ENCODE measurements at regions of chr11 and their contacts with region 1.

Region 1: DNA sequence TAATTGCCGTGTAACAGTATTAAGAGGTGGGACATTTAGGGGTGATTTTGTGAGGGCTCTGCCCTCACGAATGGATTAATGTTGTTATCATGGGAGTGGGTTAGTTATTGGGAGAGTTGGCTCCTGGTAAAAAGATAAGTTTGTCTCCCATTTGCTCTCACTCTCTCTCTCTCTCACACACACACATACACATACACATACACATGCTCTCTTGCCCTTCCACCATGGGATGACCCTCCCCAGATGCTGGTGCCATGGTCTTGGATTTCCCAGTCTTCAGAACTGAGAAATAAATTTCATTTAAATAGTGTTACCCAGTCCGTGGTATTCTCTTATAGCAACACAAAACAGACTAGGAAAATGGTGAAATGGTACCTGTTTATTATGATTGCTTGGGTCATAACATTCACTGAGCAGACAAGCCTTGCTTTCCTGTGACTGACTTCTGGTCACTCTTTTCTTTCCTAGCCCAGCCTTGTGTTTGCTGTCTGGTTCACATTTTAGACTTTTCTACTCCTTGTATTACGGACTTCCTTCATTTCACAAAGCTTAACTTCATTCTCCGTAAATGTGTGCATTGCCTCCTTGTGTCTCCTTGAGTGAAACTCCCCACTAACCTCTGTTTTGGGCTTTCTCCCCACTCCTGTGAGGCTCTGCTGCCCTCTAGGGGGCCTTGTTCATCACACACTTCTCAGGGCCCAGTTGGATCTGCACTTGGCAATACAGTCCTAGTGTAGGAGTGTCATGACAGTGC is 206.5 kb upstream of the CTSC start:
- DNase-seq: peak; percentile 55
- ATAC-seq: peak; percentile 100
- H3K4me3 ChIP-seq: no peak overlapping the region
- H3K27ac ChIP-seq: no peak overlapping the region
- H3K4me1 ChIP-seq: no peaks in the 10 kb centered on the region
- H3K27me3 ChIP-seq: no peaks in the 10 kb centered on the region
- CTCF ChIP-seq: peak; percentile 93
- EP300 ChIP-seq: no peak
- POLR2A ChIP-seq: no peak
- RAD21 ChIP-seq: peak; percentile 82

Region 2: DNA sequence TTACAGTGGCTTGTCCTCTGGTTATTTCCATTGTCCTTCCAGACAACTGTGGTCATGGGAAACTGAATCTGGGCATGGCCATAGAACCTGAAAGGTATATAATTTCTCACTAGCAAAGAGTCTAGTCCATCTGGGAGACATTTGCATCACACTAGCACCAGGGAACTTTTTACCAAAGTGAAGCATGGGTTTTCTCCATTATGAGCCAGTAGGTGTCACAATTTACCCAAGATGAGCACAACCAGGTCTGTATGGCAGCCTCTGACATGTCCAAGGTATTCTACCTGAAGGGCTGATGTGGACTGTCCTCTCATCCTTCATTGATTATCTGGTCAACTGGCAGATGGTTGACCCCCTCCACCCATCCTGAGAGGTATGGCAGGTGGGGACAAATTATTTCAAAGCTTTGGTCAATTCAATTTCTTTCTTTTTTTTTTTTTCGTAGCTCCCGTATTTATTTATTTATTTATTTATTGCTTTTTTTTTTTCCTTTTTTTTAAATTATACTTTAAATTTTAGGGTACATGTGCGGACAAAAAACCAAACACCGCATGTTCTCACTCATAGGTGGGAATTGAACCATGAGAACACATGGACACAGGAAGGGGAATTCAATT is 1080.5 kb before region 1 on chr11:
- CTCF ChIA-PET with region 1: interaction called, 4 read pairs
- POLR2A ChIA-PET with region 1: no interaction called
- in situ Hi-C with region 1: loop called (anchors 25 kb)
- intact Hi-C with region 1: no loop called
- DNase-seq: peak; percentile 38
- ATAC-seq: peak; percentile 94
- H3K4me3 ChIP-seq: no peak overlapping the region
- H3K27ac ChIP-seq: no peak overlapping the region
- H3K4me1 ChIP-seq: no peaks in the 10 kb centered on the region
- H3K27me3 ChIP-seq: no peaks in the 10 kb centered on the region; a peak in 2 of 5 replicates
- CTCF ChIP-seq: peak; percentile 66
- EP300 ChIP-seq: no peak
- POLR2A ChIP-seq: no peak
- RAD21 ChIP-seq: no peak

Region 3: GRCh38 chr11:88016392-88017170 is 527.5 kb before region 1 on chr11:
- CTCF ChIA-PET with region 1: interaction called, 17 read pairs
- POLR2A ChIA-PET with region 1: no interaction called
- in situ Hi-C with region 1: loop called (anchors 25 kb)
- intact Hi-C with region 1: loop called (anchors 1 kb)
- DNase-seq: peak; percentile 78
- ATAC-seq: peak; percentile 96
- H3K4me3 ChIP-seq: no peak overlapping the region
- H3K27ac ChIP-seq: no peak overlapping the region
- H3K4me1 ChIP-seq: no peaks in the 10 kb centered on the region
- H3K27me3 ChIP-seq: no peaks in the 10 kb centered on the region; a peak in 1 of 5 replicates
- CTCF ChIP-seq: peak; percentile 79
- EP300 ChIP-seq: no peak
- POLR2A ChIP-seq: no peak
- RAD21 ChIP-seq: 0 out of 2 replicates have a peak, but pooled peaks have one; percentile 24

Region 4: DNA sequence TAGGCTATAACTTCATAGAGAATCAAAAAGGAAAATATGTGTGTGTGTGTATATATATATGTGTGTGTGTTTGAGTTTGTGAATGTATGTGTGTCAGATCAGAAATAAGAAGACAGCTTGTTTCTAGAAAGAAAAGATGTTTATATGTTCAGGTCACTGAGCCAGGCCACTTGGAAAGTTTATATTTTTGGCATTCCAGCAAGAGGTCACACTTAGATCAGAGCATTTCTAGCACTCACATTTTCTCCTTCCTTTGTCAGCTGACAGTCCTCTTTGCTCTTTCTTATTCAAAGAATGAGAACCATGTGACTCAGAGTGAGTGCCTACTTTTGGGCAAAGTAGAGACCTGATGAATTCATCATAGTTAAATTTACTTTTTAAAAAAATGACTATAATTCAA is 391.7 kb before region 1 on chr11:
- CTCF ChIA-PET with region 1: no interaction called
- POLR2A ChIA-PET with region 1: no interaction called
- in situ Hi-C with region 1: no loop called
- intact Hi-C with region 1: no loop called
- DNase-seq: no peak
- ATAC-seq: no peak
- H3K4me3 ChIP-seq: no peak overlapping the region
- H3K27ac ChIP-seq: no peak overlapping the region
- H3K4me1 ChIP-seq: no peaks in the 10 kb centered on the region
- H3K27me3 ChIP-seq: no peaks in the 10 kb centered on the region
- CTCF ChIP-seq: no peak
- EP300 ChIP-seq: no peak
- POLR2A ChIP-seq: no peak
- RAD21 ChIP-seq: no peak

Region 5: GRCh38 chr11:88231894-88232482 is 312.1 kb before region 1 on chr11:
- CTCF ChIA-PET with region 1: interaction called, 11 read pairs
- POLR2A ChIA-PET with region 1: no interaction called
- in situ Hi-C with region 1: loop called (anchors 10 kb)
- intact Hi-C with region 1: loop called (anchors 1 kb)
- DNase-seq: peak; percentile 13
- ATAC-seq: peak; percentile 94
- H3K4me3 ChIP-seq: no peak overlapping the region
- H3K27ac ChIP-seq: no peak overlapping the region
- H3K4me1 ChIP-seq: no peaks in the 10 kb centered on the region
- H3K27me3 ChIP-seq: no peaks in the 10 kb centered on the region
- CTCF ChIP-seq: peak; percentile 55
- EP300 ChIP-seq: no peak
- POLR2A ChIP-seq: no peak
- RAD21 ChIP-seq: no peak